Left cardiac atrium (tissue), 4 donors: ENCODE measurements at regions of chr15 and their contacts with region 1.

Region 1: GRCh38 chr15:98375513-98376340 is 272.6 kb upstream of the IGF1R start:
- DNase-seq: no peak
- ATAC-seq: peak; percentile 21 to 59

Region 2: DNA sequence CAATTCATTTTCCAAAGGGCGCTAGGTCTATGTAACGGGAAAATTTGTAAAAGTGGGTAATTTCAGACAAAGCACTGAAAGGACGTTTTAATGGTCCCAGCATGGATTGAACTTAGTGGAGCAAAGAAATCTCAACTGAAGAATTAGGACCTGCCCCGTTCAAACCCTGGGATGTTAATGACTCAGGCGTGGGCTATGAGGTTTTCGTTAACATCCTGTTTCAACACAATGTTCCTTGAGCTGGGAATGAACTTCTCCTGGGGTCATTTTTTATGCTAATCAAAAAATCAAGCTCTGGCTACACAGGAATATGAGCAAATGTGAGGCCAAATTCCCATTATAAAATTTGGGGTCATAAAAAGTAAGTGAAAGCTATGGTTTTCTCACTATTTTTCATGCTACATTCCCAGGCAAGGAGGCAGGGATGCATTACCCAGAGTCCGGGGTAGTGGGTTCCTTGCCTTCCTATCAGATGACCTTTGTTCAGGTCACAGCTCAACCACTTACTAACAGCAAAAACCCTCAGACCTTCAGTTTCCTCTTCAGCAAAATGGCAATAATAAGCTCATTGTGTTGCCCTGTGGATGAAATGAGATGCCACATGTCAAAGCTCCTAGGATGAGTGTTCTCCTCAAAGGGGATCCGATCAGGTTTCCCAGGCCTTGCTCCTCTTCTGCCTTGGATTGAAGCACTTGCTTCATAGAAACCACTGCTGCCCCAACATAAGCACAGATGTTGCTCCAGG is 143.9 kb before region 1 on chr15:
- intact Hi-C with region 1: no loop called
- DNase-seq: no peak
- ATAC-seq: no peak

Region 3: GRCh38 chr15:98311566-98312188 is 64.0 kb before region 1 on chr15:
- intact Hi-C with region 1: loop called in 1 of 2 experiments (anchors 10 kb)
- DNase-seq: peak; percentile 80
- ATAC-seq: peak in 1 of 2 donors; percentile 40

Region 4: GRCh38 chr15:98428253-98428989 is 52.7 kb after region 1 on chr15:
- intact Hi-C with region 1: loop called in 1 of 2 experiments (anchors 10 kb)
- DNase-seq: peak; percentile 79
- ATAC-seq: peak; percentile 88 to 90